ENCODE measurements at regions of chr3 and their contacts with region 1.

Region 1: DNA sequence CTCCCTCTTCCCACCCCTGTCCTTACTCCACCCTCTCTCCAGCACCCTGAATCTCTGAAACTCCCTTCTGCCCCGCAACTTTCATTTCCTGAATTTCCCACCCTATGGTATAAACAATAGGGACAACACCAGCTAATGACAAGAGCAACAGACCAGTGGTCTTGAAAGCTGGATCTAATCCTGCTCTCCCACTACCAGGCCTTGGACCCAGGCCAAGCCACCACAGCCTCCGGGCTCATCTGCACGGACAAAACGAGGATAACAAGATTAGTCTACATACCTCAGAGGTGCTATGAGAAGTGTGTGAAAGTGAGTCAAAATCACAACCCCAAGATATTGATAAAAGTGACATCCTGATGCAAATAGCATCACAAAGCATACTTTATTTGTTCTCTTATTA is 128.6 kb downstream of the ERC2 start:
- DNase-seq: no peak
- H3K4me3 Mint-ChIP-seq: no peak overlapping the region
- H3K27ac Mint-ChIP-seq: no peak overlapping the region
- H3K4me1 Mint-ChIP-seq: no peaks in the 10 kb centered on the region
- H3K27me3 Mint-ChIP-seq: peaks cover 2% of the 10 kb centered on the region

Region 2: DNA sequence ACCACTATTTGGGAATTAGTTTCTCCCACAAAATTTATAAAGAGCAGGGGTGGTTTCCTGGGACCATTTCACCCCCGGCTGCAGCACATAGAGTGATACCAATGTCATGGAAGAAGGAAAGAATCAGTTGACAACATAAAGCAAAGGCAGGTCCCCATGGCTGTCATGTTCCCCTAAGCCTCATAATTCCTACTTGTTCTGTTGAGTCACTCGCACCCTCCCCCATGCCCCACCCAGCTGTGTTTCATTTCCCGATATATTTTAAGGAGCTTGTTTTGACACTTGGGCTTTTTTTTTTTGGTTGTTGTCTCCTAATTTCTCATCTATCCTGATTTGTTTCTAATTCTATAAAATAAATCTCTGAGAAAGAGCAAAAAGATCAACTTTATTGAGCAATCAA is 103.7 kb after region 1 on chr3:
- CTCF ChIA-PET with region 1: interaction called, 3 read pairs
- POLR2A ChIA-PET with region 1: no interaction called
- intact Hi-C with region 1: loop called (anchors 1 kb)
- DNase-seq: no peak
- H3K4me3 Mint-ChIP-seq: no peak overlapping the region
- H3K27ac Mint-ChIP-seq: no peak overlapping the region
- H3K4me1 Mint-ChIP-seq: no peaks in the 10 kb centered on the region
- H3K27me3 Mint-ChIP-seq: peaks cover 9% of the 10 kb centered on the region

Region 3: DNA sequence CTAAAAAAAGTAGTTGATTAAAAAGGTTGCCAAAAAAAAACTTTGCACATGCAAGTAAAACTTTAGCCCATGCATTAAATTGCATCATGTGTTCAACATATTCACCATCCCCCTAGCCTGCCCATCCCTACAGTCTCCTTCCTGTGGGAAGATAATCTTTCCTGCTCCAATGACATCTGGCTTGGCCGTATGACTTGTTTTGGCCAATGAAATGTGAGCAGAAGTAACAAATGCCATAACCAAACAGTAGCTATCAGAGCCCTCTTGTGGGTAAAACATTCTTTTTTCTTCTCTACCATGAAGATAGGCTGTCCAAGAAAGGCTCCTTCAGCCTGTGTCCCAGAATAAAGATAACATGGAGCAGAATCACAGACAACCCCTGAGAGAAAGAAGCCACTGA is 113.3 kb after region 1 on chr3:
- CTCF ChIA-PET with region 1: interaction called, 12 read pairs
- POLR2A ChIA-PET with region 1: no interaction called
- intact Hi-C with region 1: no loop called
- DNase-seq: no peak
- H3K4me3 Mint-ChIP-seq: no peak overlapping the region
- H3K27ac Mint-ChIP-seq: no peak overlapping the region
- H3K4me1 Mint-ChIP-seq: no peaks in the 10 kb centered on the region
- H3K27me3 Mint-ChIP-seq: peaks cover 20% of the 10 kb centered on the region

Measured in activated CD4-positive, alpha-beta memory T cell treated with anti-CD3 and anti-CD28 coated beads for 36 hours (primary cell).